ENCODE measurements at regions of chr2 and their contacts with region 1.

Region 1: GRCh38 chr2:240143801-240144648 is 3.6 kb upstream of the OTOS start:
- DNase-seq: peak; percentile 67
- H3K4me3 ChIP-seq: no peak overlapping the region
- H3K27ac ChIP-seq: no peak overlapping the region
- H3K4me1 ChIP-seq: no peaks in the 10 kb centered on the region
- H3K27me3 ChIP-seq: peaks cover 71% of the 10 kb centered on the region
- CTCF ChIP-seq: peak; percentile 96

Region 2: GRCh38 chr2:239602290-239603282 is 541.4 kb before region 1 on chr2:
- intact Hi-C with region 1: no loop called
- DNase-seq: no peak
- H3K4me3 ChIP-seq: no peak overlapping the region
- H3K27ac ChIP-seq: no peak overlapping the region
- H3K4me1 ChIP-seq: no peaks in the 10 kb centered on the region
- H3K27me3 ChIP-seq: peaks cover 63% of the 10 kb centered on the region
- CTCF ChIP-seq: no peak

Region 3: GRCh38 chr2:240060977-240061591 is 82.9 kb before region 1 on chr2:
- intact Hi-C with region 1: loop called (anchors 2 kb)
- DNase-seq: no peak
- H3K4me3 ChIP-seq: no peak overlapping the region
- H3K27ac ChIP-seq: no peak overlapping the region
- H3K4me1 ChIP-seq: no peaks in the 10 kb centered on the region
- H3K27me3 ChIP-seq: peaks cover 63% of the 10 kb centered on the region
- CTCF ChIP-seq: peak; percentile 71

Region 4: DNA sequence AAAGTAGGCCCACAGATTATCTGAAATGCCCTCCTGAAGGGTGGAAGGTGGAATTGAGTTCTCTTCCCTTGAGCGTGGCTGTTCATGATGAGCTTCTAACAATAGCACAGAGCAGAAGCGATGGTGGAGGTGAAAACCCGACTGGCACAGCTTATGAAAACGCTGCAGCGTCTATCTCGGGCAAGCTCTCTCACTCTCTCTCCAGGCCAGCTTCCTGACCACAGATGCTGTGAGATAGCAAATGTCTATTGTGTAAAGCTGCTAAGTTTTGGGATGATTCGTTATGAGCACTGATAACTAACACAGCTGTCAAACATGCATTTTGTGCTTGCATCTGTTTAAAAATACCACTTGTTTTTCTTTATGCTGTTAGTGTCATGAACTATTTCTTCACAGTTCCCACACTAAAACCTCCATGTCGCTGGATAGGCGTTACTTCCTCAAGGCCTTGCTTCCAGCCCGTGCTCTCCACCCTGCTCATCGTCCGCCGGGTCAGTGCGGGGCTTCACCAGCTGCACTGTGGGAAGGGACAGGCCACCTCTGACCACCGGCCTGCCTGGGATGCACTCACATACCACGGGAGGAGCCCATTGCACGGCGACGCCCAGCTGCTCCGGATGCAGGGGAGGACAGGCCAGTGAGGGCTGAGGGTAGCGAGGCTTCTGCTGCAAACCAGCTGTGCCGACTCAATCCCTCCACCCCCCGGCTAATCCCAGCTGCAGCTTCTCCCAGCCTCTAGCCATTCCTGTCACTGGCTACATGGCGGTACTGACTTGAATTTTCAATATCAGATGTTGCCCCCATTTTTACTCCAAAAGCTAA is 56.4 kb after region 1 on chr2:
- intact Hi-C with region 1: no loop called
- DNase-seq: no peak
- H3K4me3 ChIP-seq: no peak overlapping the region
- H3K27ac ChIP-seq: no peak overlapping the region
- H3K4me1 ChIP-seq: no peaks in the 10 kb centered on the region
- H3K27me3 ChIP-seq: peaks cover 48% of the 10 kb centered on the region
- CTCF ChIP-seq: no peak